ENCODE measurements at regions of chr11 and their contacts with region 1.

Region 1: GRCh38 chr11:131748151-131749050 is 378.0 kb downstream of the NTM start:
- DNase-seq: peak; percentile 74
- ATAC-seq: peak; percentile 89
- H3K4me3 Mint-ChIP-seq: no peak overlapping the region
- H3K27ac Mint-ChIP-seq: no peak overlapping the region
- H3K4me1 Mint-ChIP-seq: peaks cover 7% of the 10 kb centered on the region
- H3K27me3 Mint-ChIP-seq: no peaks in the 10 kb centered on the region
- CTCF ChIP-seq: peak; percentile 77

Region 2: DNA sequence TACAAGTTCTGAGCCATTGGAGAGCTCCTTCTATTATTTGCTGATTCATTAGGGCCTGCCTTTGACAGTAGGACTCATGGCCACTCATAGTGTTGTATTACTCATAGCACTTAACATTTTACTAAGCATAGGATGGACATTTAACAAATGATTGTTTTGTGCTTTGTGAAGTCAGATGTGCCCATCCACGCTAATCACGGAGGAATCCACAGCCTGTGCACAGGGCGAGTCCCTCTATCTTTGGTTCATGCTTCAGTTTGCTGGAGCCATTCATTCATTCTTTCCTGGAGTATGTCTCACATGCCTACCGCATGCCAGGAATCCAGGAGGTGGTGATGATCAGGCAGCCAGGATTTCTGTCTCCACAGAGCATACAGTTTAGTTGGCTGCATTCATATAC is 123.9 kb before region 1 on chr11:
- CTCF ChIA-PET with region 1: no interaction called
- POLR2A ChIA-PET with region 1: no interaction called
- DNase-seq: no peak
- ATAC-seq: no peak
- H3K4me3 Mint-ChIP-seq: no peak overlapping the region
- H3K27ac Mint-ChIP-seq: no peak overlapping the region
- H3K4me1 Mint-ChIP-seq: peaks cover 7% of the 10 kb centered on the region
- H3K27me3 Mint-ChIP-seq: no peaks in the 10 kb centered on the region
- CTCF ChIP-seq: no peak

Region 3: GRCh38 chr11:131688051-131688698 is 60.2 kb before region 1 on chr11:
- CTCF ChIA-PET with region 1: interaction called, 15 read pairs
- POLR2A ChIA-PET with region 1: no interaction called
- DNase-seq: peak; percentile 81
- ATAC-seq: peak; percentile 62
- H3K4me3 Mint-ChIP-seq: no peak overlapping the region
- H3K27ac Mint-ChIP-seq: no peak overlapping the region
- H3K4me1 Mint-ChIP-seq: 0 out of 2 replicates have a peak, but pooled peaks cover 6% of the 10 kb centered on the region
- H3K27me3 Mint-ChIP-seq: peaks cover 24% of the 10 kb centered on the region
- CTCF ChIP-seq: peak; percentile 81

Region 4: DNA sequence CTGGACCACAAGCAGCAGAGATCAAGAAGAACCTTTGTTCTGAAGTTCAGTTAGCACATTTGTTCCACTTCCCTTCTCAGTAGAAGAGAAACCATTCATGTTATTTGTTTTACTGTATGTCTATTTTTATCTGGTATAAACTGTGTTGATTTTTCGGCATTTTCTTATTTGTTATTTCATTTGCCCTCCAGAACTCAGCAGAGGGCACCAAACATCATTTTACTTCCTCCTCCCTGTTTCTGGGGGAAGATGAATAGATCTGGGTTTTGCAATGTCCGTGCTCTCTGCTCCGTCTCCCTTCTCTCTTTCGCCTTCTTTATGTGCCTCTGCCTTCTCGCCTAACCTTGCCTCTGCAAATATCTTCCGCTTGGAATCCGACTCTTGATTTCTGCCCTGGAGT is 11.0 kb before region 1 on chr11:
- CTCF ChIA-PET with region 1: interaction called, 25 read pairs
- POLR2A ChIA-PET with region 1: no interaction called
- DNase-seq: no peak
- ATAC-seq: peak; percentile 44; the same call in 1 of the 2 replicates
- H3K4me3 Mint-ChIP-seq: no peak overlapping the region
- H3K27ac Mint-ChIP-seq: no peak overlapping the region
- H3K4me1 Mint-ChIP-seq: peaks cover 5% of the 10 kb centered on the region
- H3K27me3 Mint-ChIP-seq: no peaks in the 10 kb centered on the region; the same call in 1 of the 2 replicates
- CTCF ChIP-seq: no peak

Region 5: GRCh38 chr11:131760091-131761061 is 12.0 kb after region 1 on chr11:
- CTCF ChIA-PET with region 1: interaction called, 20 read pairs
- POLR2A ChIA-PET with region 1: no interaction called
- DNase-seq: peak; percentile 64
- ATAC-seq: peak; percentile 91
- H3K4me3 Mint-ChIP-seq: no peak overlapping the region
- H3K27ac Mint-ChIP-seq: no peak overlapping the region
- H3K4me1 Mint-ChIP-seq: peaks cover 20% of the 10 kb centered on the region
- H3K27me3 Mint-ChIP-seq: no peaks in the 10 kb centered on the region
- CTCF ChIP-seq: no peak

Region 6: GRCh38 chr11:131841028-131841427 is 92.6 kb after region 1 on chr11:
- CTCF ChIA-PET with region 1: interaction called, 18 read pairs
- POLR2A ChIA-PET with region 1: no interaction called
- DNase-seq: no peak
- ATAC-seq: no peak
- H3K4me3 Mint-ChIP-seq: no peak overlapping the region
- H3K27ac Mint-ChIP-seq: no peak overlapping the region
- H3K4me1 Mint-ChIP-seq: peaks cover 44% of the 10 kb centered on the region
- H3K27me3 Mint-ChIP-seq: no peaks in the 10 kb centered on the region; the same call in none of the 2 replicates
- CTCF ChIP-seq: no peak

Region 7: GRCh38 chr11:131889146-131889577 is 140.8 kb after region 1 on chr11:
- CTCF ChIA-PET with region 1: interaction called, 14 read pairs
- POLR2A ChIA-PET with region 1: no interaction called
- DNase-seq: no peak
- ATAC-seq: peak; percentile 59
- H3K4me3 Mint-ChIP-seq: no peak overlapping the region
- H3K27ac Mint-ChIP-seq: no peak overlapping the region
- H3K4me1 Mint-ChIP-seq: 0 out of 2 replicates have a peak, but pooled peaks cover 8% of the 10 kb centered on the region
- H3K27me3 Mint-ChIP-seq: no peaks in the 10 kb centered on the region; the same call in 1 of the 2 replicates
- CTCF ChIP-seq: no peak

Region 8: DNA sequence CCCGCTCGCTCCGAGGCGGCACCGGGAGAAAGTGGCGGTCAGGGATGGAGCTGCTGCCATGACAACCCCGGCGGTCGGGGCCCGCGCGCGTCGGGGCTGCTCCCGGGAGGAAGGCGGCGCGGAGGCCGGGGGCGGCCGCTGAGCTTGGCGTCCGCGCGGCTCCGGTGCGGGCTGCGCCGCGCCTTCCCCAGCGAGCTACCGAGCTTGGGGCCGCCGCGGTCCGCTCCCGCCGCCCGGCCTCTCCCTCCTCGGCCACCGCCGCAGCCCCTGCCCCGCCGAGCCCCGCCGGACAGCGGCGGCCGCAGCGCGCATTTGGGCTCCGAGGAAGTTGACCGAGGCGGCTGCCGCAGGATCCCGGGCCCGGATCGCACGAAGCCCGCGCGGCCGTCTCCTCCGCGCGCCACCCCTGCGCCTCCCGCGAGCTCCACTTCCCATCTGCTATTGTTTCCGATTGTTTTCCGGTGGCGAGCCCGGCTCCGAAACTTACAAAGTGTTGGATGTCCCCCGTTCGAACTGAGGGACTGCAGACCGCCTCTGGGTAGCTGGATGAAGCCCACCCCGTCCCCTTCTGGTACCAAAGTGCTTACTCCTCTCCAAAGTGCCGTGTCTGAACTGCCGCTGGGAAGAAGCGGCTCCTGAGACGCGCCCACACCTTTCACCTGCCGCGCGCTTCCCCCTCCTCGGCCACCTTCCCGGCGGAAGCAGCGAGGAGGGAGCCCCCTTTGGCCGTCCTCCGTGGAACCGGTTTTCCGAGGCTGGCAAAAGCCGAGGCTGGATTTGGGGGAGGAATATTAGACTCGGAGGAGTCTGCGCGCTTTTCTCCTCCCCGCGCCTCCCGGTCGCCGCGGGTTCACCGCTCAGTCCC is 162.4 kb after region 1 on chr11:
- CTCF ChIA-PET with region 1: interaction called, 29 read pairs
- POLR2A ChIA-PET with region 1: no interaction called
- DNase-seq: peak; percentile 50
- ATAC-seq: peak; percentile 32
- H3K4me3 Mint-ChIP-seq: peak overlapping the region; percentile 88
- H3K27ac Mint-ChIP-seq: no peak overlapping the region
- H3K4me1 Mint-ChIP-seq: peaks cover 52% of the 10 kb centered on the region
- H3K27me3 Mint-ChIP-seq: peaks cover 8% of the 10 kb centered on the region; the same call in 1 of the 2 replicates
- CTCF ChIP-seq: no peak